HEK293T (cell line): ENCODE measurements at regions of chr12 and their contacts with region 1.

Region 1: GRCh38 chr12:122123051-122123760 is 44.6 kb downstream of the MLXIP start:
- DNase-seq: peak; percentile 81

Region 2: DNA sequence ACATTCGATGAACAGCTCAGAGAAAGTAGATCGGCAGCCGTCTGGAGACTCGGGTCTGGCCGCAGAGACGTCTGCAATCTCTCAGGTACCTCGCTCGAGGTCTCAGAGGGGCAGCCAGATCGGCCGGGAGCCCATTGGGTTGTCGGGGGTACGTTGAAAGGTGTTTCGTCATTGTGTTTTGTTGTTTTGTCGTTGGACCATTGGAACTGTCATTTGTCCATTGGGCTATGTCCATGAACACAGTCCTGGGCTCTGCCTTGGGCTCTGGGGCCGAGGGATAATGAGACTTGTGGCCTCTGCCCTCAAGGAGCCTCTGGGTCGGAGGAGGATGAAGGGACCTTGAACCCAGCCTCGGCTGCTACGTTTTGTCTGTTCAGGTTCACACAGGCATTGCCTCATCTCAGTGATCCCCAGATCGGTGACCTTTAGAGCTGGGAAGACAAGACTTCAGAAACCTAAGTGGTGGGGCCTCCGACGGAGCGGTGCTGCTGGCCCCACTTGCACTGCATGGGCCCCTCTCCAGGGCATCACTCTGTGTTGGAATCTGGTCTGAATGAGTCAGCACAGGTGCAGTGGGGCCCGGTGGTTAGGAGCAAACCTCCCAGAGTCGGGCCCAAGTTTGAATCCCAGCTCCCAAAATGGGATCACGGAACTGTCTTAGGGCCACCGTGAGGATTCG is 68.2 kb before region 1 on chr12:
- CTCF ChIA-PET with region 1: interaction called, 15 read pairs
- POLR2A ChIA-PET with region 1: no interaction called
- DNase-seq: no peak

Region 3: DNA sequence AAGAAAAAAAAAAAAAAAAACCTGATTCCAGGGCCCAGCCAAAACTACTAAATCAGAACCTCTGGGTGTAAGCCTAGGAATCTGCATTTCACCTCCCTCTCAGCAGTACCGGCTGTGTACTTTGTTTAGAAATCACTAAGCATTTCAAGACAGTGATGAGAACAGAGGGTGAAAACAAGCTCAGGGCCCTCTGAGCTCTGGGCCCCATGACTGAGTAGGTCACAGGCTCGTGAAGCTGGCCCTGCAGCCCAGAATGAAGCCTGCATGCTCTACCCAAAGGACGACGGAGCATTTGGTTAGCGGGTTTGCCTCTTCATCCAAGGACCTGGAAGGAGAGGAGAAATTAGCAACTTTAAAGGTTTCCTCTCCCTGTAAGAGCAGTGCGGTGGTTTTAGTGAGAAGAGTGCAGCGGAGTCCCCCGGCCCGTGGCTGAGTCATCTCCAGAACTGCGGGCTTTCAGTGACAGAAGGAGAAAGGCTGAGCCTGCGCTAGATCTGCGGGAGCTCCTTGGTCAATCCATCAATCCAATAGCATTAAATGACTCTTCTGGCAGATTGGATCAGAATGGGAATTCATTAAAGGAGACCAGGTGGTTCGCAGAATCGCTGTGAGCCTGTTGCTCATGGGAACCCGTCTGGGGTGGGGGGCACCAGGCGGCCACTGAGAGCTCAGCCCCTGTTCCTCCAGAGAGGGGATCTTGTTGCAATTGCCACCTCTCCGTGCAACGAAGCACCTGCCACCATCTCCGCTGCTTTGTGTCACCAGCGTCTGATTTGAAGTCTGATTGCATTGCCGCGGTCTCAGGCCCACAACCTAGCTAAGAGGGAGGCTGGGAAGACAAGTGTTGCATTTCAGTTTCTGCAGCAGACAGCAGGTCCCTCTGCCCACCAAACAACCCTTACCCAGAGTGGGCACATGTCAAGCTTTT is 43.5 kb after region 1 on chr12:
- CTCF ChIA-PET with region 1: no interaction called
- POLR2A ChIA-PET with region 1: no interaction called
- DNase-seq: no peak